Activated CD4-positive, alpha-beta T cell treated with anti-CD3 and anti-CD28 coated beads for 36 hours (primary cell): ENCODE measurements at regions of chr10 and their contacts with region 1.

Region 1: DNA sequence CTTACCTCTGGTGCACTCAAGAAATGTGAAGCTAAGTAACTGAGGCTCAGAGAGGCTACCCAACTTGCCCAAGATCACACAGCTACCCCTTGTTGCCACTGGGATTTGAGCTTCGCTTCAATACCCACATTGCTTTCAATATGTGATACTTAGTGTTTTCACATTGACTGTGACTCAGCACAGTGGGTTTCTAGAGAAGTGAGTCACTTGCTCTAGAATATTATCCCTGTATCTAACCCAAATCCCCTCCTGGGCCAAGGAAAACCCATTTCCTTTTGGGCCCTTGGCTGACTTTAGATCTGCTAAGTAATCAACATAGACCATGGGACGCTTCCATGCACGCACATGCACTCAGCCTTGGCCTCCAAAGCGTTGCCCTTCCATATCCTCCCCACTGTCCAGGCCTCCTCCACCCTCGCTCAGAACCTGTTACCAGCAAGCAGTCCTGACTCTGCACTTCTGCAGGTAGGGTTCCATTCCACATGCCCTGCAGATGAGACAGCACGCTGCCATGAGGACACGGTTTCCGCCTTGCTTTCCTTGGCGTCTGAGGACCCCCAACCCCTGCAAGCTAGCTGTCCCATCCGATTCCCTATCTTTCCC is 87.7 kb upstream of the CHST15 start:
- DNase-seq: peak; percentile 16
- ATAC-seq: peak; percentile 95
- H3K4me3 Mint-ChIP-seq: no peak overlapping the region
- H3K27ac Mint-ChIP-seq: no peak overlapping the region
- H3K4me1 Mint-ChIP-seq: peaks cover 13% of the 10 kb centered on the region
- H3K27me3 Mint-ChIP-seq: peaks cover 2% of the 10 kb centered on the region

Region 2: GRCh38 chr10:124138195-124138882 is 42.7 kb before region 1 on chr10:
- CTCF ChIA-PET with region 1: no interaction called
- POLR2A ChIA-PET with region 1: no interaction called
- intact Hi-C with region 1: no loop called
- DNase-seq: no peak
- ATAC-seq: no peak
- H3K4me3 Mint-ChIP-seq: no peak overlapping the region
- H3K27ac Mint-ChIP-seq: no peak overlapping the region
- H3K4me1 Mint-ChIP-seq: no peaks in the 10 kb centered on the region
- H3K27me3 Mint-ChIP-seq: peaks cover 2% of the 10 kb centered on the region

Region 3: GRCh38 chr10:124152916-124153826 is 27.9 kb before region 1 on chr10:
- CTCF ChIA-PET with region 1: no interaction called
- POLR2A ChIA-PET with region 1: no interaction called
- intact Hi-C with region 1: loop called in 1 of 2 experiments (anchors 2 kb)
- DNase-seq: peak; percentile 72
- ATAC-seq: peak; percentile 85
- H3K4me3 Mint-ChIP-seq: peak overlapping the region; percentile 0
- H3K27ac Mint-ChIP-seq: no peak overlapping the region
- H3K4me1 Mint-ChIP-seq: no peaks in the 10 kb centered on the region
- H3K27me3 Mint-ChIP-seq: peaks cover 11% of the 10 kb centered on the region